A673 (cell line): ENCODE measurements at regions of chr6 and their contacts with region 1.

Region 1: GRCh38 chr6:38034274-38034914 is 214.9 kb downstream of the ZFAND3 start:
- DNase-seq: peak; percentile 44
- H3K4me3 ChIP-seq: no peak overlapping the region
- H3K27ac ChIP-seq: peak overlapping the region; percentile 41
- H3K4me1 ChIP-seq: peaks cover 36% of the 10 kb centered on the region
- H3K27me3 ChIP-seq: no peaks in the 10 kb centered on the region
- CTCF ChIP-seq: peak; percentile 79

Region 2: DNA sequence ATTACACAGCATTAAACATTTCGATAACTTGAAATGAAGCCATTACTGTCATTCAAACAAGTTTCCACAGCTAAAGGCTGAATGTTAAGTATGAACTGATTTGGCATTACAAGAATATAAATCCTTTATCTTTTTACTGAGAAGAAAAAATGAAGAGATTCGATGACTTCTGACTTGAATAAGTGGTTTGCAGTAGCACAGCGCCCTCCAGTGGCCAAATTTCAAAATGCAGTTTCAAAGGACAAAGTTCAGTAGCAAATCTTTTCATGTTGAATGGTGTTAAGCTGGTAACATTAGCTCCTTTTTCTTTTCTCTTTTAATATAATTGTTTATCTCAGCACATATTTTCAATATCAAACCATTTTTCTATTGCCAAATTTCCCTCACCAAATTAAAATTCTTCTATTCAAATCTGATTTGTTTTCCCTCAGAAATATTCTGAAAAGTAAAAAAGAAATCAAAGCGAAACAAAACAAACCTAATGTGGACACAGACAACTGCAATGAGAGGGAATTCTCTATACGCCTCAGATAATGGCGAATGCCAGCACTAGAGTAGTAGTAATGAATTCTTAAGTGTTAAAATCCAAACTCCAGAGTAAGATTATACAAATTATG is 459.6 kb after region 1 on chr6:
- CTCF ChIA-PET with region 1: interaction called, 8 read pairs
- POLR2A ChIA-PET with region 1: no interaction called
- intact Hi-C with region 1: loop called (anchors 5 kb)
- DNase-seq: peak; percentile 69
- H3K4me3 ChIP-seq: no peak overlapping the region
- H3K27ac ChIP-seq: no peak overlapping the region
- H3K4me1 ChIP-seq: no peaks in the 10 kb centered on the region
- H3K27me3 ChIP-seq: no peaks in the 10 kb centered on the region
- CTCF ChIP-seq: peak; percentile 90

Region 3: GRCh38 chr6:39154705-39155104 is 1120.3 kb after region 1 on chr6:
- CTCF ChIA-PET with region 1: no interaction called
- POLR2A ChIA-PET with region 1: interaction called, 14 read pairs
- intact Hi-C with region 1: no loop called
- DNase-seq: no peak
- H3K4me3 ChIP-seq: no peak overlapping the region
- H3K27ac ChIP-seq: no peak overlapping the region
- H3K4me1 ChIP-seq: no peaks in the 10 kb centered on the region
- H3K27me3 ChIP-seq: peaks cover 33% of the 10 kb centered on the region
- CTCF ChIP-seq: no peak